Sciatic nerve (tissue), 2 donors: ENCODE measurements at regions of chr17 and their contacts with region 1.

Region 1: DNA sequence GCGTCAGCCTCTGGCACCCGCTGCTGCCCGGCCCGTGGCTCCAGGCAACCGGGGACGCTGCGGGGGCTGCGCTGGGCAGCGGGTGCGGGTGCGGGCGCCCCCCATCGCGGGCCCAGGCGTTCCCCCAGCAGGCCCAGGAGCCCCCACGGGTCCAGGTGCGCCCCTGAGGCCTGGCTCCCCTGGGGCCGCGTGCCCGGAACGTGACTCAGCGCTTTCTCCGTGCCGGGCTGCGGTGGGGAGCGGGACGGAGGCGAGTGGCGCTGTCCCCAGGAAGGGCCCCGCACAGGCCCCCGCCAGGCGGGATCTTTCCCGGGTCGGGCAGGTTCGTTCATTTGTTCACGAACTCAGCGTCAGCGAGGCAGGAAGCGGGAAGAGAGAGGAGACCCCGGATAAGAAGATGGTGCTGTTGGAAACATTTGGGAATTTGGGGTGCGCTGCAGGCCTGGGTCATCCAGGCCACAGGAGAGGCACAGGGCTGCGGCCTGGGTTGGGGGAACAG is 18.4 kb upstream of the EXOC7 start:
- DNase-seq: no peak
- ATAC-seq: peak; percentile 56

Region 2: DNA sequence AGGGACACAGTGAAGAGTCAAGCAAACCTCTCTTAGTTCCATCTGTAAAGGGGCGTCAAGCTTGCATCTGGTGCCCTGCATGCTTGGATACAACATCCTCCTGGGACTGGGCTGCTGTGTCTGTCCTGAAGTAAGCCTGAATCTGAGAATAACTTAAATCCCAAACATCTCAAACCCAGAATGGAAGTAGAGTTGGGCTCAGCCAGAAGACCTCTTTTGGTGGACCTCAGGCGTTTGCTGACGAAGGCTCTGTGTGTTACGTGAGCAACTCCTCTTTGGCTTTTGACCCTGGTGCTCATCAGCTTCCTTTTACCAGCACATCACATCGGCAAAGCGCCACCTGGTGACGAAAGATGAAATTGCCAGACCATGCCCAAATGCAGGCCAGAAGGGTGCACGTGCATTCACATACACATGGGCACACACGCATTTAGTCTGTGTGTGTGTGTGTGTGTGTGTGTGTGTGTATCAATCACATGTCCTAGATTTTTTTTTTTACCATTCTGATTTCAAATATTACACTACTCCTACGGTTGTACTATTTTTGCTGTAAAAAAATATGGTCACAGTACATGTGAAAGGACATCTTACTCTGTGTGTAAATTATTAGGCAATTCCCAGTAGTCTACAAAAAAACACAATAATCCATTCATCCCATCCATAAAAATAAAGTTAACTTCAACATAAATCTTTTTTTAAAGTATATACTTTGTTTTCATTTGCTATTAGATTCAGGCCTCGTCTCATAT is 60.2 kb after region 1 on chr17:
- intact Hi-C with region 1: loop called (anchors 5 kb)
- DNase-seq: peak; percentile 94
- ATAC-seq: peak; percentile 95

Region 3: DNA sequence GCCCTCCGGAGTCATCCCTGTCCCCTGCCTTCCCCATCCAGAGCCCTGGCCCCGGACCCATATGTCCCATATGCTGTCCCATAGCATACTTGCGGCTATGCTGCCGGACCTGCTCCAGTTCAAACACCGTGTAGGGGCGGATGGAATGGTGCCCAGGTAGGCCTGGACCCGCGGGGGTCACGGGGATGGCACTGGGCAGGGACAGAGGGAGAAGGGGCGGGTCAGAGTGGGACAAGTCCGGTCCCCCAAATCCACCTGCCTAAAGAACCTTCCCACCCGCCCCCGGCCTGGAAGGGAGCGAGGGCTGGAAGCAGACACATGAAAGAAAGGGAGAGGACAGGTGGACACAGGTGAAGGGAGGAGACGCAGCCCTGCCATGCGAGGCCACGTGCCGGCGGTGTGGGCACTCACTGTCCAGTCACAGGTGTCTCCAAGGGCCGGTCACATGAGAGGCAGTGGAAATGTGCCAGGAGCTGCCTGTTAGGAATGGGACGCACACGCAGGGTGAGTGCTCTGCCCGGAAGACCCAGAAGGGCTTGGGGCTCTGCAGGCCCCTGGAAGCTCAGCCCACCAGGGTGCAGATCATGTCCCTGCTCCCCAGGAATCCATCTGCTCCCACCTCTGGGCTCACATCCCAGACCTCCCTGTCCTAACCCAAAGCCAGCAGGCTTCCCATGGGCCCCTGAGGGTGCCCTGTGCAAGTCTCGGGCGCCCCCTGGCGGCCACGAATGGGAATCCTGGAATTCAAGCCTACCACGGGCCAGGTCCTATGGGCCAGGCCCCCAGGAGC is 157.2 kb after region 1 on chr17:
- intact Hi-C with region 1: loop called (anchors 2 kb)
- DNase-seq: peak; percentile 95
- ATAC-seq: peak; percentile 93